ENCODE measurements at regions of chr17 and their contacts with region 1.

Region 1: DNA sequence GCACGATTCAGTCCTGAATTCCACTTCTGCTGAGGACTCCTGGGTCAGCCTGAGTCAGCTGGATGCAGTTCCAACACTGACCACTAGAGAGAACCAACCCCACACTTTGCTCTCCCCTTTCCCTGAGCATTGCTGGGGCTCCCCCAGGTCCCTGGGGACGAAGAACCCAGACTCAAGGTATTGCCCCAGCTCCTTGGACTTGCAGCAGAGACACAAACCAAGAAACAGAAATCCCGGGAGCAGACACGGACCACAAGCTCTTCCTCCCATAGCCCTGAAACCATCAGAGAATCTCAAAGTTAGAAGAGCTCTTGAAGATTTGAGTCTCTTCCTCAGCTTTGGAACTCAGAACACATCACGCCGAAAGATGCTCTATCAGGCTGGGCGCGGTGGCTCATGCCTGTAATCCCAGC is 678 bp upstream of the GH1 start:
- DNase-seq: peak; percentile 64
- H3K4me3 Mint-ChIP-seq: no peak overlapping the region
- H3K27ac Mint-ChIP-seq: no peak overlapping the region
- H3K4me1 Mint-ChIP-seq: peaks cover 8% of the 10 kb centered on the region
- H3K27me3 Mint-ChIP-seq: peaks cover 8% of the 10 kb centered on the region

Region 2: GRCh38 chr17:63984651-63985386 is 65.5 kb after region 1 on chr17:
- intact Hi-C with region 1: loop called (anchors 2 kb)
- DNase-seq: peak; percentile 50
- H3K4me3 Mint-ChIP-seq: no peak overlapping the region
- H3K27ac Mint-ChIP-seq: peak overlapping the region; percentile 73
- H3K4me1 Mint-ChIP-seq: peaks cover 18% of the 10 kb centered on the region
- H3K27me3 Mint-ChIP-seq: no peaks in the 10 kb centered on the region

Region 3: DNA sequence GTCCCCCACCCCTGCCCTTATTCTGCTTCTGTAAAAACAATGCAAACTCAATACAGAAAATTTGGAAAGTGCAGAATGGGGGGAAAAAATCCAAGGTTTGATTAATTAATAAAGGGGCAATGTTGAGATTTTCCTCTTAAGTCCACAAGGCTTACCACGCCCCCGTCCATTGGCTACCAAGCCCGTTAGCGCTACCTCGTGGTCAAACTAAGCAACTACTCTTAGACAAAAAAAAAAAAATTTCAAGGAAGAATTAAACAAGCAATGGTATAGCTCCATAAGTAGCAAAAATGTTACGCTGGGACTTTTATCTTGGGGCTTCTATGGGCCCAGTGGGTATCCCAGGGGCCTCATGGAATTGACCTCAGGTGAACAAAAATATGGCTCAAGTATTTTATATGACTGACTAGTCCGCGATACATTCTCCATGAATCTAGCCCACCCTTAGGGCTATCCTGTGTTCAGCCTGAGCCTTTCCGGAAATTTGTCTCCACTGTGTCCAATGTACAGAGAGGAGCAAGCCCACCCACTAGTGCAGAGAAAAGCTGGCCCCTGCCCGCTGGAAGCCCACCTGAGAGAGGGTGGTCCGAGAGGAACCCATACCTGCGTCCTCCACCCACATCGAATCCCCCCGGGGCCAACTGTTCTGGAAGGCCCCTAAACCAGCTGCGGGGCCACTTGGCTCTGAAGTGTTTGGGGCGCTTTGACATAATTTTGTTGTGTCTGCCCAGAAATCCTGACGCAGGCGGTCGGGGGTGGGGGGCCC is 362.8 kb after region 1 on chr17:
- intact Hi-C with region 1: loop called (anchors 5 kb)
- DNase-seq: peak; percentile 30
- H3K4me3 Mint-ChIP-seq: no peak overlapping the region
- H3K27ac Mint-ChIP-seq: no peak overlapping the region
- H3K4me1 Mint-ChIP-seq: peaks cover 4% of the 10 kb centered on the region
- H3K27me3 Mint-ChIP-seq: no peaks in the 10 kb centered on the region

Measured in activated T-helper 2 cell treated with anti-CD3 and anti-CD28 coated beads, Interferon-gamma antibody, Interleukin-2, Interleukin-4, amounts not matched to agents 10 μg/mL and 5 μg/mL and 100 μg/mL, durations not matched to agents 14 hours and 24 hours and 36 hours (primary cell).